Dorsolateral prefrontal cortex (tissue), 120 donors: ENCODE measurements at regions of chr16 and their contacts with region 1.

Region 1: DNA sequence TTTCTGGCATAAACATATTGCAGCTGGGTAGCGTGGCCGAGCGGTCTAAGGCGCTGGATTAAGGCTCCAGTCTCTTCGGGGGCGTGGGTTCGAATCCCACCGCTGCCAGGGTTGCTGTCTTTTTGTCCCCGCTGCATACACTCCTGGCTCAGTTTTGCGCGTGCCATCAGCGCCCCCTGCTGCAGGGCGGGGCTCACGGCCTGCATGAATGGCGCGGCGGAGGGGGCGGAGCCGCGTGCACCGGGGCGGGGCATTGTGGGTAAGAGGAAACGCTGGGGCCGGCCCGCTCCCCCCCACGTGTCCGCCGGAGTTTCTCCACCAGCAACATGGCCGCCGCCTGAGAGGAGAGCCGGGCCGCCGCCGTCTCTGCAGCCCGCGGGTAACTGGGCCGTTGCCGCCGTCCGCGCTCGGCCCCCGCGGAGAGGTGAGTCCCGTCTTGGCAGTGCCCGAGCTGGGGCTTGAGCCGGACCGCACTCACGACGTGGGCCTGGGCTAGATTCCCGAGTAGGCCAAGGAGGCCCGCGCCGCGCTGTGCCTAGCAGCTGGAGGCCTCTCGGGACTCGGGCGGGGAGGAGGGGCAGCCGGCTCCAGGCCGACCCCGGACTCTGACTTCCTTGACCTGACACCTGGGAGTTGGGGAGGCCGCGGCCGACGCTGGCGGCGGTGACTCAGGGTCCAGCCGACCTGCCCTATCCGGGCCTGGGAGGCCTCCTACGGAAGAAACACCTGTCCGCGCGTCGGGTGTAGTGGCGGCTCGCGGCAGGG is at the start of gene POLR3E:
- DNase-seq: peak; percentile 98 to 99 (median 98)
- H3K4me3 ChIP-seq: peak within 1 kb of the TSS; percentile 55 to 98 (median 89)
- H3K27ac ChIP-seq: peak within 1 kb of the TSS; percentile 66 to 97 (median 91)
- H3K27me3 ChIP-seq: no peaks in the 10 kb centered on the region
- CTCF ChIP-seq: peak; percentile 84 to 100 (median 96)
- total RNA-seq, gene POLR3E: 29.2 to 66.1 (median 45.5) TPM

Region 2: GRCh38 chr16:21952793-21953540 is 344.3 kb before region 1 on chr16 and contains the start of gene UQCRC2:
- intact Hi-C with region 1: loop called (anchors 5 kb)
- DNase-seq: peak; percentile 85 to 96 (median 92)
- H3K4me3 ChIP-seq: peak within 1 kb of the TSS; percentile 67 to 100 (median 94)
- H3K27ac ChIP-seq: peak within 1 kb of the TSS; percentile 92 to 100 (median 98)
- H3K27me3 ChIP-seq: no peaks in the 10 kb centered on the region
- CTCF ChIP-seq: peak in 20 of 56 donors; percentile 2 to 42 (median 18)
- total RNA-seq, gene UQCRC2: 215 to 422 (median 323) TPM

Region 3: DNA sequence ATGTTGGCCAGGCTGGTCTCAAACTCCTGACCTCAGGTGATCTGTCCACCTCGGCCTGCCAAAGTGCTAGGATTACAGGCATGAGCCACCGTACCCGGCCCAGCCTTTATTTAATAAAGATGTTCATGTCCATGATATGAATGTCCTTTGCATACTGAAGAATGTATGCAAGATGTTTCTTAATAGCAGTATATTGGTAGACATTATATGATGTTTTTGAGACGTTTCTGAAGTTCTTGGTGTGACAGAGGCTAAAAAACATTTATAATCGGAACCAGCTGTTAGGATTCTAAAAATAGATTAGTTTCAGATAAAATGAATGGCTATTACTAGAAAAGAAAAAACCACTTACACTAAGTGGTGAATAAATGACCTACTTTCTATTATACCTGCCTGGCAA is 308.2 kb before region 1 on chr16:
- intact Hi-C with region 1: no loop called
- DNase-seq: no peak
- H3K4me3 ChIP-seq: no peak overlapping the region
- H3K27ac ChIP-seq: no peak overlapping the region
- H3K27me3 ChIP-seq: no peaks in the 10 kb centered on the region
- CTCF ChIP-seq: no peak